Right cardiac atrium (tissue), 5 donors: ENCODE measurements at regions of chr20 and their contacts with region 1.

Region 1: DNA sequence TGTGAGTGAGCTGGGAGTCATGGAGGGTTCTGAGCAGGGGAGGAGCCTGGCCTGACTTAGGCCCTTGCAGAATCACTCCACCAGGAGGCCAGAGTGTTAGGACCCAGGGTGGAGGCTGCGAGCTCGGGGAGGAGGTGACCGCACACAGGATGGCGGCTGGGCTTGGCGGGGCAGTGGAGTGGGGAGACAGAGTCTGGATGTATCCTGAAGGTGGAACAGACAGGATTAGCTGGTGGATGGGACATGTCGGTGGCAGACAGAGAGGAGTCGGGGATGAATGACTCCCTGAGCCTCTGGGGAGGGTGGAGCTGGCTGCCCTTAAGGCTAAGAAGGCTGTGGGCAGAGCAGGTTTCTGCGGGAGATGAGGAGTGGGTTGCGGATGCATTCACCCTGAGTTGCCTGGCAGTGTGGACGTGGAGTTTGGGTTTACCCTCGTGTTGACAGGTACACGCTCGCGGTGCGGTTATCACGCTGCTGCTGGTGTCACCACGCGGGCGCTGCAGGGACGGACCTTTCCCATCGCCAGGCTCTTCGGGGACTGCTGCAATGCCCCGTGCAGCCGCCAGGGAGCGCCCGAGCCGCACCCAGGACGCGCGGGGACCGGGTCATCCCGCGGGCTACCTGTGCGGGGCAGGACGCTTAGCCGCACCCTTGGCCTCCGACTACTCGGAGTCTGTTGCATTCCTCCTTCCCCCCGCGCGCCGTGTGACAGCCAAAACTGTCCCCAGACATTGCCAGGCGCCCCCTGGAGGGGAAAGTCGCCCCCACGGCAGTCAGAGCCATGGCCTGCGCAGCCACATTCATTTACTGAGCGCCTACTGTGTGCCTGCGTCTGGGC is 43.0 kb upstream of the PTGIS start:
- DNase-seq: peak; percentile 72 to 90 (median 90)
- ATAC-seq: peak; percentile 71 to 77
- H3K4me3 ChIP-seq: no peak overlapping the region
- H3K27ac ChIP-seq: no peak overlapping the region
- H3K4me1 ChIP-seq: peaks cover 4% of the 10 kb centered on the region
- H3K27me3 ChIP-seq: no peaks in the 10 kb centered on the region

Region 2: DNA sequence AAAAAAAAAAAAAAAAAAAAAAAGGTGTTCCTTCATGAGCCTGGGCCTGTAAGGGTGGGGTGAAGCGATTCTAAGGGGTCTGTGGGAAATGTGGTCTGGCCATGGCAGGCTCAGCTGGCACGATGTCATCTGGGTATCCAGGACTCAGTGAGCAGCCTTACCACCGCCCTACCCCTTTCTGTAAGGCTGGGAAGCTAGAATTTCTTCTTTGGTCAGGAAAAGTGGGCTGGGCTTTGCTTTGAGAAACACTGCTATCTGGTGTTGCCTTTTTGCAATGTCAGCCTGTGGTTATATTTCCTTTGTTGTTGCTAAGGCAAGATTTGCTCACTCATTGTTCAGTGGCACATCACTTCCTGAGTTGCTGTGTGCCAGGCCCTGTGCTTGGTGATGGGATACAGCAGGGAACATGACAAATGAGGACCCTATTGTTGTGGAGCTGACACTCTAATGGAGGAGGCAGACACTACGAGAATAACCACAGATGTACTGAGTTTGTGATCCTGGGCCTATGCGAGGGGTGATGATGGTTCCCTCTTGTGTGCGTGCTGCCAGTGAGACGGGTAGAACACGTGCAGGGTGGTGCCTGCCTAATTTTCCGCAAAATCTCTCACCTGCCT is 287.2 kb before region 1 on chr20:
- intact Hi-C with region 1: loop called in 1 of 4 experiments (anchors 10 kb)
- DNase-seq: peak in 1 of 3 donors; percentile 62
- ATAC-seq: peak; percentile 69 to 85
- H3K4me3 ChIP-seq: no peak overlapping the region
- H3K27ac ChIP-seq: no peak overlapping the region
- H3K4me1 ChIP-seq: no peaks in the 10 kb centered on the region
- H3K27me3 ChIP-seq: no peaks in the 10 kb centered on the region

Region 3: GRCh38 chr20:49541733-49542513 is 69.0 kb before region 1 on chr20:
- intact Hi-C with region 1: loop called (anchors 2 to 5 kb)
- DNase-seq: peak; percentile 64 to 83 (median 76)
- ATAC-seq: peak; percentile 45 to 74
- H3K4me3 ChIP-seq: no peak overlapping the region
- H3K27ac ChIP-seq: no peak overlapping the region
- H3K4me1 ChIP-seq: no peaks in the 10 kb centered on the region
- H3K27me3 ChIP-seq: no peaks in the 10 kb centered on the region

Region 4: DNA sequence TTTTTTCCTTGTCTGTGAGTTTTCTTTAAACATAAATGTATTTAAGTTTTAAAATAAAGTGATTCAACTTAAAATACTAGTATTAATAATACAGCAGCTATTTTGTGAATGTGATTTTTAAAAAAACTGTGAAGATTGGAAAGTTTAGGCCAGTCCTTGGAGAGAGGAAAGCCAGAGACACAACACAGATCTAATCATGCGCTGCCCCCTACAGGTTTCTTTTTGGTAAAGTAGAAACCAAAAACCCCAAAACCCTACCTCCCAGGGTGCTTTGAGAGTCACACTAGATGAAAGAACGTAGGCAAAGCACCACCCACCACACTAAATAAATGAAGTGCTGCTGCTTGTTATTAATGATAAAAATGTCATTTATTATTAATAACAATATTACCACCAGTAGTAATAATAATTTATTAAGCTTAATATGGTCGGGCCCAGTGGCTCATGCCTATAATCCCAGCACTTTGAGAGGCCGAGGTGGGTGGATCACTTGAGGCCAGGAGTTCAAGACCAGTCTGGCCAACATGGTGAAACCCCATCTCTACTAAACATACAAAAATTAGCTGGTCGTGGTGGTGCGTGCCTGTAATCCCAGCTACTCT is 235.4 kb after region 1 on chr20:
- intact Hi-C with region 1: loop called (anchors 5 to 10 kb)
- DNase-seq: no peak
- ATAC-seq: peak; percentile 64 to 77
- H3K4me3 ChIP-seq: no peak overlapping the region
- H3K27ac ChIP-seq: no peak overlapping the region
- H3K4me1 ChIP-seq: peaks cover 5% of the 10 kb centered on the region
- H3K27me3 ChIP-seq: no peaks in the 10 kb centered on the region

Region 5: DNA sequence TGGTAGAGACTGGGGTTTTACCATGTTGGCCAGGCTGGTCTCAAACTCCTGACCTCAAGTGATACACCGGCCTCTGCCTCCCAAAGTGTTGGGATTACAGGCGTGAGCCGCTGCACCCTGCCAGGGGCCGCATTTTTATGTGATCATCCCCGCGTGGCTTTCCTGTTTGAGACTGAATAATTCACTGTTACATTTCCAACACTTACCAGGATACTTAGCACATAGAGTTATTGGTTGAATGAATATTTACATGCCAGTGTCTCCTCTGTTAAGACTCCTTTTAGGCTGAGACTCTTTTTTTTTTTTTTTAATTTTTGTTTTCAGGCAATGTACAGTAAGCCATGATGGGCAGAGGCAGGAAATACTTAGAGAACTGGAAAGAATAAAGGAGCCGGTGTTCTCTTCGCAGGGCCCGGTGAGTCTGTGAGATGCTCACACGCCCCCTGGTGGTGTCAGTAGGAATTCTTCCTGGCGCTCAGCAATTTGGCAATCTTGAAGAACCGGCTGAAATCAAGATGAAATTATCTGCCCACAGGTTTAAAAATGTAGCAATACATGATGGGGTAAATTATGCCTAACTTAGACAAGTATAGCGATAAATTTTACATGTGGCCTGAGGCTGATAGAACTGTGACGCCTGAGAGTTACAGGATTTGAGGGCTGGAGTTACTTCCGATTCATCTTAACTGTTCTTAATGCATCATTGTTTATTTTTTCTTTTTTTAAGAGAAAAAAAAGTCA is 317.7 kb after region 1 on chr20:
- intact Hi-C with region 1: loop called in 2 of 4 experiments (anchors 2 kb)
- DNase-seq: peak; percentile 73 to 89 (median 83)
- ATAC-seq: peak; percentile 84 to 86
- H3K4me3 ChIP-seq: no peak overlapping the region
- H3K27ac ChIP-seq: no peak overlapping the region
- H3K4me1 ChIP-seq: no peaks in the 10 kb centered on the region
- H3K27me3 ChIP-seq: no peaks in the 10 kb centered on the region